Right ventricle myocardium superior (tissue), 1 donor: ENCODE measurements at regions of chr1 and their contacts with region 1.

Region 1: GRCh38 chr1:33295450-33296081 is 25.3 kb downstream of the A3GALT2 start:
- DNase-seq: peak; percentile 93
- ATAC-seq: peak; percentile 90

Region 2: GRCh38 chr1:33228935-33229487 is 66.6 kb before region 1 on chr1:
- intact Hi-C with region 1: loop called (anchors 10 kb)
- DNase-seq: no peak
- ATAC-seq: peak; percentile 95

Region 3: DNA sequence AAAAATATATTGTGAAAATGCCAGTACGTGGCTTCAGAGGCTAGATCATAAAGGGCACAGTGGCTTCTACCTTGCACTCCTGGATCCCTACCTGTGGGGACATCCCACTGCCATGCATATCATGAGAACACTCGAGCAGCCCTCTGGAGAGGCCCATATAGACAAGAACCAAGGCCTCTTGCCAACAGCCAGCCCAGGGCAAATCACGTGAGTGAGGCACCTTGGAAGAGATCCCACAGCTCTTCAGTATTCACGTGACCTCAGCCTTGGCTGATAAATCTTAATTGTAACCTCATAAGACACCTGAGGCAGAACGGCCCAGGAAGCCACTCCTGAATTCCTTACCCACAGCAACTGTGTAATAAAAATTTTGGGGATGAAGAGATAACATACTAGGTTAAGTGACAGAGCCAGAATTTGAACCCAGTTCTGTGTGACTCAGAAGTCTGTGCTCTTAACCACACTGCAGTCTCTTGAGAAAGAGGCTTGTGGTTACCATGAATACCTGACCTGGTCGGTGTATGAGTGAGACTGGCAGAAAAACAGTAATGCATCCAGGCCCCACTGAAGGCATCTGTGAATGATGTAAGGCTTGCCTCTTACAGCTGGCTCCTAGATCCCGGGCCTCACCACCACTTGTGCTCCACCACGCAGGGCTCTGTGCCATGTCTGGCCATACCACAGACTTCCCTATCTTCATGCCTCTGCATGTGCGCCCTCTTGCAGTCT is 32.2 kb after region 1 on chr1:
- intact Hi-C with region 1: no loop called
- DNase-seq: peak; percentile 73
- ATAC-seq: peak; percentile 69

Region 4: DNA sequence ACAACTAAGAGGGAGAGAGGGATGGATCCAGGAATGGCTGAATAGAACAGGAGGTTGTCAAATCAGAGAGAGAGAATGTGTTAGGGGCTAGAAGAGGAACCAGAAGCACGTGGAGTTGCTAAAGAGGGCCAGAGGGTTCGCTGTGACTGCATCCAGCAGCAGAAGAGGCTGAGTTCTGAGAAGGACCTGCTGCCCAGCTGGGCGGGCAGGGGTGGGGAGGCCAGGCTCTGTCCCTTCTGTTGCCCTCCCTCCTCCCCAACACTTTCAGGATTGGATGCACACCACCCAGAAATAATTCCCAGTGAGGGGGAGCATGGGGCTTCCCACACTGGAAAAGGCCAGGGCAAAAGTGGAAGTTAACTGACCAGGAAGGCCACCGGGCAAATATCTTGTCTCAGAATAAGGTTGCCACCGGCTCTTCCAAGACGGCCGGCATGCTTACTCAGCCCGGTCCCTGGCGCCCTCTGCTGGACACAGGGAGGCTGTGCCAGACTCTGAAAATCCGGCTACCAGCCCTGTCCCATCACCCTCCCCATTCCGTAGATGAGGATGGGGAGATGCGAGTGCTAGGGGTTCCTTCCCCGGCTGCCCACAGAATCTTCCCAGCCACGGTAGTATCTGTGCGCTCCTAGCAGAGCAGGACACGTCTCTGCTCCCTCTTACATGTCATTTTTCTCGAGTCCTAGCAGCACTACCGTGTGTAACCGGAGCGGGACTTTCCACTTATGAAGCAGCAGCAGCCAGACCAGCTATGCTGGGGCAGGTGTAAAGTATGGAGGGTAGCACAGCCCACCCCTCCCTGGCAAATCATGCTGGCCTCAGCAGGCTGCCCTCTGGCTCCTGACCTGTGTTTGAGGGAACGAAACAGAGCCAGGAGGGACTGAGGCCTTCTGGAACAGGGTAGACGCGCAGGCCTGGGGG is 72.2 kb after region 1 on chr1:
- intact Hi-C with region 1: loop called (anchors 2 kb)
- DNase-seq: peak; percentile 92
- ATAC-seq: peak; percentile 77

Region 5: GRCh38 chr1:33410091-33410701 is 114.6 kb after region 1 on chr1:
- intact Hi-C with region 1: no loop called
- DNase-seq: no peak
- ATAC-seq: peak; percentile 72

Region 6: DNA sequence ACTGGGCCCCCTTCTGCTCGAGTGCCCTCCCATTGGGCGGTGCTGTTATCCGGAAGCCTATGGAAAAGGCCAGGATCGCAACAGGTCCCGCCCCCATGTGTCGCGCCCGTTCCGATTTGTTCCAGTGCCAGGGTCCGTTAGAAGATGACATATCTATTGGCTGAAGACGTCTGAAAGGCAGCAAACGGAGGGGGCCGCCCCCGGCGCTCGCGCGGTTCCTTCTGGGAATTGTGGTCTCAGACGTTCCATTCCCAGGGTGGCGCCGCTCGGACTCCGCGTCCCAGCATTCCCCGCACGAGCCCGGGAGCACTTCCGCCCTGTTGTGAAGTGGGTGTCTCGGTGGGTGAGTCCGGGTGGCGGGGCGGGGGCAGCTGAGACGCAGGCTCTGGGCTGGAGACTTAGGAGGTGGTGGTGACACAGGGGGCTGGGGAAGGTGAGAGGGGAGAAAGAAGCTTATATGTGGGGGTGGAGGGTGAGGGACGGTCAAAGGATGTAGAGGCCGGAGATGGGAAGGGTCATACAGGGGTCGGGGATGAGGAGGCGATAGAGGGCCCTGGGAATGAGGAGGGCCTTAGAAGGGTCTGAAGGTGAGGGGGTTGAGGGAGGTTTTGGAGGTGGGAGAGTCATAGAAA is 176.9 kb after region 1 on chr1 and contains the start of gene ZSCAN20:
- intact Hi-C with region 1: loop called (anchors 5 kb)
- DNase-seq: peak; percentile 99
- ATAC-seq: peak; percentile 92
- total RNA-seq, gene ZSCAN20: 4.4 TPM